ENCODE measurements at regions of chr20 and their contacts with region 1.

Region 1: DNA sequence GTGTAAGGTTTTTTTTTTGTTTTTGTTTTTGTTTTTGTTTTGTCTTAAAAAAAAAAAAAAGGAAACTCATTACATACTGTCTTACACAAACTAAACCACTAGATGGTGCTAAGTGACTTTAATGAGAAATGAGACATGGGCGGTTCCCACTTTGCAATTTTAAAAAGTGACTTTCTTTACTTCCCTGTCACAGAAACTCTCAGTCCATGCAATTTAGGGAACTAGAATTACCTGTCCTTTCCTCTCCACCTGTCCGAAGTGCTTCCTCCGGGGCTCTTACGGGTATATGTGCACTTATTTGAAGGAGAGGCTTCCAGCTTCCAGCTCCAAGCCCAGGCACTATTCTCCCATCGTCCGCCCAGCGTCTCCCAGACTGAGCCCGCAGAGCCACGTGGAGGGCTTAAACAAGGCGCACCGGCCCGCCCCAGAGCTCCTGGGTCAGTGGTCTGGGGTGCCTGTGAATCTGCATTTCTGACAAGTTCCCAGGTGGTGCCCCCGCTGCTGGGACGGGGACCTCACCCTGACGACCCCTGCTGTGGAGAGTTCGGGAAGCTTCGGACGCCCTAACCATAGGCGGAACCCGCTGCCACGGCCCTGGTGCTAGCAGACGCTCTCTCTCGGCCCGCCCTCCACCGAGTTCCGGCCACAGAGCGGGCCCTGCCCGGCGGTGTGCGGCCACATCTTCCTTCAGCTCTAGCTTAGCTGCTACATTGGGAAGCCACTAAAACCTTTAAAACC is 26.1 kb downstream of the BFSP1 start:
- DNase-seq: peak in 24 of 35 experiments; percentile 4 to 80 (median 29)
- ATAC-seq: peak; percentile 75 to 79 (median 76)
- H3K4me3 ChIP-seq: peak overlapping the region; percentile 53 to 65
- H3K4me3 Mint-ChIP-seq: peak overlapping the region; percentile 86 to 88 (median 88)
- H3K27ac ChIP-seq: peak overlapping the region; percentile 48
- H3K27ac Mint-ChIP-seq: peak overlapping the region; percentile 83 to 90
- H3K4me1 ChIP-seq: peaks cover 9 to 43% of the 10 kb centered on the region in 2 experiments
- H3K4me1 Mint-ChIP-seq: peaks cover 30 to 42% (median 31%) of the 10 kb centered on the region in 3 donors
- H3K27me3 ChIP-seq: no peaks in the 10 kb centered on the region
- H3K27me3 Mint-ChIP-seq: no peaks in the 10 kb centered on the region

Region 2: DNA sequence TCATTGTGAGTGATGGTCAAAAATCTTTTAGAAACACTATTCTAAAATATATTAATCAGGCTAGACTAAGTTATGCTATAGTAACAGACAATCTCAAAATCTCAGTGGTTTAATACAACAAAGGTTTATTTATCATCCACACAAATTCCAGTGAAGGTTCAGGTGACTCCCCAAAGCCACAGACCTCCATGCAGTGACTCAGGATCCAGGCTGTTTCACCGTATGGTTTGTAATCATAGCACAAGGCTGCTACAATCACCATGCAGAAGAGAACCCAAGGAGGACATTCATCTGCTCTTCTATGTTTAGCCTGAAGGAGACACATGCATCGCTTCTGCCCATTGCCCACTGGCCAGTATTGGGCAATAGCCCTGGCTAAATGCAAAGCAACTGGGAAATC is 20.1 kb before region 1 on chr20:
- CTCF ChIA-PET with region 1: no interaction called
- POLR2A ChIA-PET with region 1: no interaction called
- DNase-seq: no peak
- ATAC-seq: no peak
- H3K4me3 ChIP-seq: no peak overlapping the region
- H3K4me3 Mint-ChIP-seq: no peak overlapping the region
- H3K27ac ChIP-seq: no peak overlapping the region
- H3K27ac Mint-ChIP-seq: no peak overlapping the region
- H3K4me1 ChIP-seq: no peaks in the 10 kb centered on the region
- H3K4me1 Mint-ChIP-seq: no peaks in the 10 kb centered on the region
- H3K27me3 ChIP-seq: peaks cover 5 to 8% of the 10 kb centered on the region in 2 experiments
- H3K27me3 Mint-ChIP-seq: peaks cover 9 to 12% of the 10 kb centered on the region in 2 donors

Region 3: DNA sequence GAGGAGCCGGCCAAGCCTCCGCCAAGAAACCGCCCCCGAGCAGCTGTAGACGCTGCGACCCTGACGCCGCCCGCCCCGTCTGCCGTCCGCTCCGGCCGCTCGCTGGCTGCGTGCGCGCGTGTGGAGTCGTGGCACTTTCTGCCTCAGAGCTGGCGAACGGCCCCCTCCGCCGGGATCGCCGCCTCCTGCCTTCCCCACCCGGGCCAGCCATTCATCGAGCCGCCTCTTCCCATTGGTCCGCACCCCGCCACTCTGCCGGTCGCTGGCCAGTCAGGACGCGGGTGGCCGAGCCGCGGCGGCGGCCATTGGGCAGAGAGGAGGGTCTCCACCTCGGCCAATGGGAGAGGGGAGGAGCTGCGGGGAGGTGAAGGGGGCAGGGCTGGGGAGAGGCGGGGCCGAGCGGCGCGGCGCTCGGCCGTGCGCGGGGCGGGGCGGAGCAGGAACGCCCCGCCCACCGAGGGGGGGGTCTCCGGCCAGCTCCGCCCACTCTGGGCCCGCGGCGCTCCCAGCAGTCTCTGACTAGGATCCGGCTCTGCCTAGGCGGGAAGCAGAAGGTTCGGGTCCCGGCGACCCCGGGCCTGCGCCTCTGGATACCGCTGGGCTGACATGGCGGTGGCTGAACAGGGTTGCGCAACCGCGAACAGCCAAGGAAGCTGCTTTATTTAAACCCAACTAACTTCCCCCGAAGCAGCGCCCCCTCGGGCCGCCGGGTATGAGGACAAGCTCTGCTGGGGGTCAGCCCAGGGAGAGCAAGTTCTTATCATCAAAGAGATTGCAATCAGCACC is 177.2 kb after region 1 on chr20 and contains the start of gene RRBP1:
- CTCF ChIA-PET with region 1: interaction called in 1 of 2 experiments, 19 read pairs
- POLR2A ChIA-PET with region 1: no interaction called
- DNase-seq: peak; percentile 91 to 97 (median 95)
- ATAC-seq: peak; percentile 92 to 93 (median 93)
- H3K4me3 ChIP-seq: peak within 1 kb of the TSS; percentile 67 to 73
- H3K4me3 Mint-ChIP-seq: peak within 1 kb of the TSS; percentile 83 to 86 (median 85)
- H3K27ac ChIP-seq: peak within 1 kb of the TSS; percentile 54
- H3K27ac Mint-ChIP-seq: peak within 1 kb of the TSS; percentile 75 to 86
- H3K4me1 ChIP-seq: peaks cover 3 to 22% of the 10 kb centered on the region in 2 experiments
- H3K4me1 Mint-ChIP-seq: peaks cover 17 to 26% (median 24%) of the 10 kb centered on the region in 3 donors
- H3K27me3 ChIP-seq: peaks cover 0 to 22% of the 10 kb centered on the region in 2 experiments
- H3K27me3 Mint-ChIP-seq: peaks cover 23 to 35% of the 10 kb centered on the region in 2 donors
- total RNA-seq, gene RRBP1: 26.3 to 32.4 (median 30.1) TPM

Region 4: DNA sequence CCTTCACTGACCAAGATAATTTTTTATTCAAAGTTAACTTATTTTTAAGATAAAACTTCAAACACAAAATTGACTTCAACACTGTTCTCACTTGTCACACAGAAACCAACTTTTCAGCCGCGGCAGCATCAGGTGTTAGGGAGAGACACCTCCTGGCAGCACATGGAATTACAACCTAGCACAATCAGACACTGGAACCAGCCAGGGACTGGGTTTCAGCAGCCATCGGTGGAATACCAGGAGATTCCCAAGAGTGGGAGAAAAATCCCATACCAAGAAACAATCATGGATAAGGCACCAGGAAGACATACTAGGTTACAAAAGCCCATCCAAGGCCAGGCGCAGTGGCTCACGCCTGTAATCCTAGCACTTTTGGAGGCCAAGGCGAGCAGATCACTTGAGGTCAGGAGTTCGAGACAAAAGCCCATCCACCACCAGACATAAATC is 393.5 kb after region 1 on chr20:
- CTCF ChIA-PET with region 1: interaction called, 7 to 14 read pairs
- POLR2A ChIA-PET with region 1: no interaction called
- DNase-seq: peak in 34 of 35 experiments; percentile 24 to 80 (median 54)
- ATAC-seq: peak; percentile 53 to 77 (median 62)
- H3K4me3 ChIP-seq: no peak overlapping the region
- H3K4me3 Mint-ChIP-seq: no peak overlapping the region
- H3K27ac ChIP-seq: no peak overlapping the region
- H3K27ac Mint-ChIP-seq: no peak overlapping the region
- H3K4me1 ChIP-seq: peaks cover 3 to 4% of the 10 kb centered on the region in 2 experiments
- H3K4me1 Mint-ChIP-seq: peaks cover 10 to 16% (median 11%) of the 10 kb centered on the region in 3 donors
- H3K27me3 ChIP-seq: peaks cover 0 to 20% of the 10 kb centered on the region in 2 experiments
- H3K27me3 Mint-ChIP-seq: peaks cover 28 to 30% of the 10 kb centered on the region in 2 donors

Region 5: DNA sequence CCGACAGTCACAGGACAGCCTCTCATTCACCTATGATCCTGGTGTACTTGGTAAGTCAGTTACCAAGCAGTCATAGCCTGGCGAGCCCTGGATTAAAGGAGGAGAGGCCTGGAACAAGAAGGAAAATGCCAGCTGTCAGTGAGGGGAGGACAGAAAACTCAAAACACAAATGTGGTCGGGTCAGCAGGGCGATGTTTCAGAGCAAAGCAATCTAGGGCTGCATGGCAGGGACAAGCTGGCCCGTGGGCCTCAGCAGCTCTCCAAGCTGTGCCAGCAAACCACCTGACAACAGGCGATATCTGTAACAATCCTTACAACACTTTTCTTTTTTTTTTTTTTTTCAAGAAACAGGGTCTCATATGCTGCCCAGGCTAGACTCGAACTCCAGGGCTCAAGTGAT is 504.0 kb after region 1 on chr20:
- CTCF ChIA-PET with region 1: no interaction called
- POLR2A ChIA-PET with region 1: no interaction called
- DNase-seq: no peak
- ATAC-seq: no peak
- H3K4me3 ChIP-seq: no peak overlapping the region
- H3K4me3 Mint-ChIP-seq: no peak overlapping the region
- H3K27ac ChIP-seq: no peak overlapping the region
- H3K27ac Mint-ChIP-seq: no peak overlapping the region
- H3K4me1 ChIP-seq: no peaks in the 10 kb centered on the region
- H3K4me1 Mint-ChIP-seq: peaks cover 0 to 4% (median 0%) of the 10 kb centered on the region in 3 donors
- H3K27me3 ChIP-seq: peaks cover 0 to 4% of the 10 kb centered on the region in 2 experiments
- H3K27me3 Mint-ChIP-seq: no peaks in the 10 kb centered on the region